ENCODE measurements at regions of chr12 and their contacts with region 1.

Region 1: DNA sequence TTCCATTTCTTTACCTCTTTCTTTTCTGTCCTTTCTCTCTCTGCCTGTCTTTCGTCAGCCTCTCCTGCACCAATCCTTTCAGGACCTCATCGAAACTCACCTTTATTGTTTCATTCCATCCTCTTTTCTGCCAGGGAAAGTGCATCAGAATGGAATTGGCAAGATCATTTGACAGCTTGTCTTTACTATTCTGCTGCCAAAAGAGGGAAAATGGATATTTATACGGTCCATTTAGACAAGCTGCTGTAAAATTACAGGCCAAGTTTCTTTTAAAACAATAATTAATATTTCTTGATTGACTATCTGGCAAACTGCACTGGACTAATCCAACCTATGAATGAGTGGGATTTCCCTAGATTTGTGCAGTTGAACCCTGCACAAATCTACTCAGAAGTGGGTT is 7.6 kb upstream of the SRGAP1 start:
- DNase-seq: no peak
- ATAC-seq: no peak
- H3K4me3 ChIP-seq: no peak overlapping the region
- H3K27ac ChIP-seq: no peak overlapping the region
- H3K4me1 ChIP-seq: no peaks in the 10 kb centered on the region
- H3K27me3 ChIP-seq: no peaks in the 10 kb centered on the region
- CTCF ChIP-seq: no peak

Region 2: DNA sequence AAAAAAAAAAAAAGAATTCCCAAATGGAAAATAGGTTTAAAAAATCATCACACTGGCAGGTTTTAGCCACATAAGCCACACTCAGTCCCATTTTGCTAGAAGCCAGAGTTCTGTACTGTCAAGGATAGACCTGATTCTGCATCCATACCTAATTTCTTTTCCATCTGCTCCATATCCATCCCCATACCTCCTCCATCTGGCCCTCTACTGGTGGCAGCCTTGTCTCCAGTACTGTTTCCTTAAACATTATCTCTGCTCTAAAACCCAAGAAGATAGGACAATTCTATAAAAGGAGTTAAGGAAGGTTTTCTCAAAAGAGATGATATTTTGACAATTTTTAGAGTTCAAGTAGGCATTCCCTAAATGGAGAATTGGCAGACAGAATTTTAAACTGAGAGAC is 83.2 kb before region 1 on chr12:
- intact Hi-C with region 1: no loop called
- DNase-seq: no peak
- ATAC-seq: no peak
- H3K4me3 ChIP-seq: no peak overlapping the region
- H3K27ac ChIP-seq: no peak overlapping the region
- H3K4me1 ChIP-seq: no peaks in the 10 kb centered on the region
- H3K27me3 ChIP-seq: no peaks in the 10 kb centered on the region
- CTCF ChIP-seq: no peak

Region 3: DNA sequence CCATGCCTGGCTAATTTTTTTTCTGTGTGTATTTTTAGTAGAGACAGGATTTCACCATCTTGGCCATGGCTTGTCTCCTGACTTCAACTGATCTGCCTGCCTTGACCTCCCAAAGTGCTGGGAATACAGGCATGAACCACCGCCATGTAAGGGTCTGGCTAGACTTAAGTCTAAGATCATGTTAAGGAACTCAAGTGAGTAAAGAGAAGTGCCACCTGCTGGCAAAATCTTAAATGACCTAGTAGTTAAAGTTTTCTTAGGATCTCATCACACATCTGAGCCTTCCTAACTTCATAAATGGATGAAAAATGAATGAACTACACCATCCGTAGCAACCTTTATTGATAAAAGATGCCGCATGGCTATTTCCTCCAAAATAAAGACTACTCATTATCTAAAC is 555.3 kb after region 1 on chr12:
- intact Hi-C with region 1: loop called in 1 of 2 experiments (anchors 10 kb)
- DNase-seq: no peak
- ATAC-seq: no peak
- H3K4me3 ChIP-seq: no peak overlapping the region
- H3K27ac ChIP-seq: no peak overlapping the region
- H3K4me1 ChIP-seq: no peaks in the 10 kb centered on the region
- H3K27me3 ChIP-seq: peaks cover 0 to 30% (median 6%) of the 10 kb centered on the region in 3 donors
- CTCF ChIP-seq: no peak